ENCODE measurements at regions of chr22 and their contacts with region 1.

Region 1: GRCh38 chr22:46122511-46122971 is 27.8 kb upstream of the PPARA start:
- DNase-seq: peak; percentile 69
- ATAC-seq: peak; percentile 66
- H3K4me3 ChIP-seq: no peak overlapping the region
- H3K27ac ChIP-seq: no peak overlapping the region
- H3K4me1 ChIP-seq: peaks cover 7% of the 10 kb centered on the region; the same call in 1 of the 2 replicates
- H3K27me3 ChIP-seq: no peaks in the 10 kb centered on the region
- CTCF ChIP-seq: peak; percentile 87

Region 2: DNA sequence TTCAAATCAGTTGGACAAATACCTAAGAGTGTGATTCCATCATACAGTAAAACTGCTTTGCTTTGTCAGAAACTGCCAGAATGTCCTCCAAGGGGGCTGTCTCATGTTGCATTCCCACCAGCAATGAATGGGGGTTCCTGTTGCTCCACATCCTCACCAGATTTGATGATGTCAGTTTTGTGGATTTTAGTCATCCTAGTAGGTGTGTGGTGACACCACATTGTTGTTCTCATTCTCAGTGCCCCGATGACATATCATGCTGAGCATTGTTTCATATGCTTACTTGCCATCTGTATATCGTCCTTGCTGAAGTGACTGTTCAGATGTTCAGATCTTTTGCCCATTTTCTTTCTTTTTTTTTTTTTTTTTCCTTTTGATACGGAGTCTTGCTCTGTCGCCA is 90.5 kb after region 1 on chr22:
- CTCF ChIA-PET with region 1: no interaction called
- POLR2A ChIA-PET with region 1: no interaction called
- intact Hi-C with region 1: no loop called
- DNase-seq: no peak
- ATAC-seq: no peak
- H3K4me3 ChIP-seq: no peak overlapping the region
- H3K27ac ChIP-seq: no peak overlapping the region
- H3K4me1 ChIP-seq: no peaks in the 10 kb centered on the region
- H3K27me3 ChIP-seq: no peaks in the 10 kb centered on the region
- CTCF ChIP-seq: no peak

Region 3: GRCh38 chr22:46296257-46297150 is 174.0 kb after region 1 on chr22 and contains the start of gene GTSE1:
- CTCF ChIA-PET with region 1: no interaction called
- POLR2A ChIA-PET with region 1: no interaction called
- intact Hi-C with region 1: loop called (anchors 5 kb)
- DNase-seq: peak; percentile 97
- ATAC-seq: peak; percentile 96
- H3K4me3 ChIP-seq: peak within 1 kb of the TSS; percentile 84
- H3K27ac ChIP-seq: peak within 1 kb of the TSS; percentile 63
- H3K4me1 ChIP-seq: peaks cover 13% of the 10 kb centered on the region
- H3K27me3 ChIP-seq: no peaks in the 10 kb centered on the region
- CTCF ChIP-seq: 0 out of 2 replicates have a peak, but pooled peaks have one; percentile 18
- total RNA-seq, gene GTSE1: 20.6 and 26.4 TPM in 2 replicates